A673 (cell line): ENCODE measurements at regions of chr14 and their contacts with region 1.

Region 1: DNA sequence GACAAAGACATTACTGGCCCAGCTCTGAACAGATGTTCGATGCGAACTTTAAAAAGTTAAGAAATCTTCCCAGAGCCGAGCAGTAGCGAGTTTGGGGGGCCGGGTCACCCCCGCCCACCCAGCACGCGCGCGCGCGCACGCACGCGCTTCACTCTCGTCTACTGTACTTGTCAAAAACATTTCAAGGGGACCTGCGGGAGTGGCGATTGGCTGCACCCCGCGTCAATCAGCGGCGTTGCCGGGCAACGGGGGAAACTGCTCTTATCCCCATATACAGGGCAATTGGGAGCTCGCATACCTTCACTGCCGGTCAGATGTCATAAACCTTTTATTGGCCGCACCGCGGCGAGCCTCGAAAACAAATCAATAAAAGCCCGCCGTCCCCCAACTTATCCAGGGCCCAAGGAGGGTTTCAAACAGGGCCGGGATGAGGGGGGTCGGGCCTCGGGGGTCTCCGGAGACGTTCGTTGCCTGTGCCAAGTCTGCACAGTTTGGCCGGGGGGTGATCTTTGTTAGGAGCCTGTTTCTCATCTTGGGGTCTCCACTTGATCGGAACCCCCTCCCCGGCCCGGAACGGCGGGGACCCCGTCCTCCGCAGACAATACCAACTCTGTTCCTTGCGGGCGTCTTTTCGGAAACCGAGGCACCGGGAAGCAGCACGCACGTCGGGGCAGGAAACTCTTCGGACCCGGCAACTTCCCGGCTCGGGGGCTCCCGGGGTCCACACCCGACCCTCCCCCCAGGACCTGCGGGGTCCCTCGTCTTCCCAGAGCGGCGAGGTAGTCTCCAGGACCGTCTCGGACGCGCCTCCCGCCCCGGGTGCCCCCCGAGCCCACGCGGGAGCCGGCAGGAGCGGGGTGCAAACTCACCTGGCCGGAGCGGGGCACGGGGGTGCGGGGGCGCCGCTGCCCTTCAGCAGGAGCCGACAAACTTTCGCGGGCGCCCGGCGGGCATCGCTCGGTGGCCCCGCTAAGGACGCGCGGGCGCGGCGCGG is 734 bp downstream of the FOXN3 start:
- DNase-seq: peak; percentile 97
- H3K4me3 ChIP-seq: peak overlapping the region; percentile 64
- H3K27ac ChIP-seq: peak overlapping the region; percentile 54
- H3K4me1 ChIP-seq: peaks cover 4% of the 10 kb centered on the region
- H3K27me3 ChIP-seq: no peaks in the 10 kb centered on the region
- CTCF ChIP-seq: no peak

Region 2: DNA sequence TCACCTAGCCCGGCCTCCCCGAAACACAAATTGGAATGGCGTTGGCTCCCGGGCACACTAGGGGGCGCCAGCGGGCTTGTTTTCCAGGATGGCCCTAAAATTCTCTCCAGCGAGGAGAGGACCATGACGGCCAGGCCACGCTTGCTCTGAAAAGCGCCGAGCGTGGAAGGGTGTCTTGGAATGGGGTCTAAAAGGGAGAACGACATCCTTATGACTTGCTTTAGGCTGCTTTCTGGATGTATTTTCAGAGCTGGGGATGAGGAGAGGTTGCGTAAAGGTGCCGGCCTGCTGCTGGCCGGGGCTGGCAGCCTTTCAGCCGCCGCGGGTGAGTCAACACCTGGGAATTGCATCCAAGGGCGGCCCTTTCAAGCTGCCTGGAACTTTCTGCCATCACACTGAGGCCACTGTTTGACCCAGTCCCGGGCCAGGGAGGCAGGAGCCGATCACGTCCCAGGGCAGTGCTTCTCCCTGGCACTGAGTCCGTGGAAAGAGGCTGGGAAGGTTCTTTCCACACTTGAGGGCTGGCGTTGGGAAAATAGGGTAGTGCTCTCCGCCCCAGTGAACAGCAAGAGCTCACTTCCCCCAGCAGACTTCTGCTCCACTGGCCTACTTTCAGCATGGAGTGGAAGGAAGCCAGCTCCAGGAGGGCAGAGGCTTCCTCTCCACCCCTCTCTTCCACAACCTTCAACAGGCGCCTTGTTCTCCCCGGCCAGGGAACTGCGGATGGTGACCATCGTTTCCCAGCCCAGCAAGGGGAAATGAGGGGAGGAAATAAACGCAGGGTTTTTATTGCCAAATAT is 375.6 kb before region 1 on chr14:
- CTCF ChIA-PET with region 1: no interaction called
- POLR2A ChIA-PET with region 1: no interaction called
- intact Hi-C with region 1: loop called (anchors 5 kb)
- DNase-seq: peak; percentile 81
- H3K4me3 ChIP-seq: peak overlapping the region; percentile 30
- H3K27ac ChIP-seq: no peak overlapping the region
- H3K4me1 ChIP-seq: no peaks in the 10 kb centered on the region
- H3K27me3 ChIP-seq: peaks cover 12% of the 10 kb centered on the region
- CTCF ChIP-seq: peak; percentile 98

Region 3: DNA sequence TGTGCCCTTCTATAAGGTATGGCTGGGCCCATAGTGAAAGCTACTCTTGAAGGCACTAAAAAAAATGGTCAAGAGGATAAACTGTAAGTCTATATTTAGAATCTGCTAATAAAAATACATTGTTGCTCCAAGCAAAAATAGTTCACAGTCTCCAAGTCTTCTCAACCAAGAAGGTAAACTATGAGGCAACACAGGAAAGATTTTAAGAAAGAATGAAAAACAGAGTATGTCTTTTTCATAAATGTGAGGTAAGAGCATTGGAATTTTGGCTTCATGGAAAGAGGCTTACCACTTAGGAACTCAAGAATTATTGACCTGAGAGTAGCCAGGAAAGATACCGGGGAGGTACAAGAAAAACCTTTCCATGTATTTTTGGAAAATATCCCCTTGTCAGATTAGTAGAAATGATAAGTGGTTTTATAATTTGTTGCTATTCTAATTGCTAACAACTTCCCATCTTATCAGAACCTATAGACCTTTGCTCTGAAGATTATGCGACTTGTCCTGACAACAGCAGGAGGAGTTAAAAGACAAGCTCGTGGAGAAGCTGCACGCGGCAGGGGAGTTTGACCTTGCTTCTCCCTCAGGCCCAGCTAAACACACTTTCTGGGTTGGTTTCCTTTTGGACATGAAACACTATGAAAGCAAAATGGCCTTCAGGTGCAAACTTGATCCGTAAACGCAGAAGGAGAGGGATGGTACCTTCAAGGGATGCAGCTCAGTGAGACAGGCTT is 237.3 kb before region 1 on chr14:
- CTCF ChIA-PET with region 1: no interaction called
- POLR2A ChIA-PET with region 1: no interaction called
- intact Hi-C with region 1: loop called (anchors 1 kb)
- DNase-seq: no peak
- H3K4me3 ChIP-seq: no peak overlapping the region
- H3K27ac ChIP-seq: no peak overlapping the region
- H3K4me1 ChIP-seq: no peaks in the 10 kb centered on the region
- H3K27me3 ChIP-seq: no peaks in the 10 kb centered on the region
- CTCF ChIP-seq: no peak

Region 4: GRCh38 chr14:89240414-89240813 is 175.9 kb before region 1 on chr14:
- CTCF ChIA-PET with region 1: no interaction called
- POLR2A ChIA-PET with region 1: no interaction called
- intact Hi-C with region 1: loop called (anchors 5 kb)
- DNase-seq: no peak
- H3K4me3 ChIP-seq: no peak overlapping the region
- H3K27ac ChIP-seq: no peak overlapping the region
- H3K4me1 ChIP-seq: peaks cover 18% of the 10 kb centered on the region
- H3K27me3 ChIP-seq: no peaks in the 10 kb centered on the region
- CTCF ChIP-seq: no peak

Region 5: GRCh38 chr14:89303457-89304435 is 112.6 kb before region 1 on chr14:
- CTCF ChIA-PET with region 1: no interaction called
- POLR2A ChIA-PET with region 1: no interaction called
- intact Hi-C with region 1: loop called (anchors 10 kb)
- DNase-seq: peak; percentile 81
- H3K4me3 ChIP-seq: no peak overlapping the region
- H3K27ac ChIP-seq: peak overlapping the region; percentile 33
- H3K4me1 ChIP-seq: peaks cover 36% of the 10 kb centered on the region
- H3K27me3 ChIP-seq: no peaks in the 10 kb centered on the region
- CTCF ChIP-seq: no peak

Region 6: DNA sequence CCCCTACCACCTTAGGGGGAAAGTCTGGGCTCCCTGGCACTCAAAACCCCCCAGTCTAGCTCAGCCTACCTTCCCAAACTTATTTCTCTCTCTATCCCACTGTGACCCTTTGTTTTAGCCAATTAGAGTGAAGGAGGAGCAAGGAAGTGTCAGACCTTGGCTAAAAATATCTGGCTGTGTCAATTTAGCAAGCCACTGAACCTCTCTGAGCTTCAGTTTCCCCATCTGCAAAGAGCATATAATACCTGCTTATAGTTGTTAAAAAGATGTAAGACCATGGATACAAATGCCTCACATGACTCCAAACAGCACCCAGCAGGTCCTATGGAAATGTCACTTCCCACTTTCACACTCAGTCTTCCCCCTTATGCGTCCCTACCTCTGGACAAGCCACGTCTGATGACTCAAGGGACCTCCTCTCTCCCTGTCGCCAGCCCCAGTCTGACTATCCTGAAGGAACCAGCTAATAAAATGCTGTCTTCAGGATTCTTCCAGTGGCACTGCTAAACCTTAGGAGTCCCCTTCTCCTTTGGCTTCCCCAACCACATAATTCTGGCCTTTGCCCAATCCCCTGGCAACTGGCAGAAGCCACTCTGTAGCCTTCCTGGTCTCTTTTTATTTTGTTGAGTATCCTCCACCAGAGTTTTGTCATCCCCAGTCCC is 18.6 kb before region 1 on chr14:
- CTCF ChIA-PET with region 1: no interaction called
- POLR2A ChIA-PET with region 1: no interaction called
- intact Hi-C with region 1: no loop called
- DNase-seq: no peak
- H3K4me3 ChIP-seq: no peak overlapping the region
- H3K27ac ChIP-seq: no peak overlapping the region
- H3K4me1 ChIP-seq: no peaks in the 10 kb centered on the region
- H3K27me3 ChIP-seq: no peaks in the 10 kb centered on the region
- CTCF ChIP-seq: no peak